ENCODE measurements at regions of chr1 and their contacts with region 1.

Region 1: DNA sequence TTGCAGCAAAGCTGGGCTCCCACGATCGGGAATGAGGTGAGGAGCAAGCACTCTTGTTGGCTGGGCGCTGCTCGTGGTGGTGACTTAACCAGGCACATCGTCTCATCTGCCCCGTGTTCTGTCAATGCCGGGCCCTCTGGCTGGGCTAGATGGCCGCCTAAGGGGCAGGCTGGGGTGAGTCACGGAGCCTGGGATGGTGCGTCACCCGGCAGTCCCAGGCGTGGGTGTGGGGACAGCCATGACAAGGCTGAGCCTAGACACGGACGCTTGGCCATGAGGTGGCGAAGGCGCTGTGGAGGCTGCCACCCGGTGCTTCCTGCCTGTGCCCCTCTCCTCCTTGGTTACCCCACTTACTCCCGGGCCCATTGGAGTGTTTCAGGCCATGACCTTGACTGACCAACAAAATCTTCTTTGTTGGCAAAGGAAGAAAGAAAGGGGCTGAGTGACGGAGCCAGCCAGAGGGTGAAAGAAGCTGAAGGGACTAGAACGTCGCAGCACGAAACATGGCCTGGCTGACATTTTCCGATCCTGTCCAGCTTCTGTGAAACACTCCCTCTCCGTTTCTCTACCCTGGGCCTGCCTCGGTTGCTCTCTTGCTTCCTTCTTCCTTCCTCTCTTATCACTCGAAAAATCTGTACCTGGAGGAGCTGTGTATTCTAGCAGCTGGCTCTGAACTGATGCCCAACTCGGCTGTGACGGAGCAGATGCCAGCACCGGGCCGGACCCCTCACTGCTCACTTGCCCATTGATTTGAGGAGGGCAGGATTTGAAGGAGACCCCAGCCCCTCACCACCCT is 596 bp downstream of the CD247 start:
- DNase-seq: peak; percentile 85
- ATAC-seq: peak; percentile 81
- H3K4me3 Mint-ChIP-seq: peak overlapping the region; percentile 93
- H3K27ac Mint-ChIP-seq: peak overlapping the region; percentile 98
- H3K4me1 Mint-ChIP-seq: peaks cover 50% of the 10 kb centered on the region
- H3K27me3 Mint-ChIP-seq: no peaks in the 10 kb centered on the region

Region 2: GRCh38 chr1:167220537-167221125 is 297.1 kb before region 1 on chr1 and contains the start of gene POU2F1:
- CTCF ChIA-PET with region 1: interaction called, 12 read pairs
- POLR2A ChIA-PET with region 1: interaction called, 10 read pairs
- DNase-seq: peak; percentile 99
- ATAC-seq: peak; percentile 87
- H3K4me3 Mint-ChIP-seq: peak within 1 kb of the TSS; percentile 91
- H3K27ac Mint-ChIP-seq: peak within 1 kb of the TSS; percentile 95
- H3K4me1 Mint-ChIP-seq: peaks cover 30% of the 10 kb centered on the region
- H3K27me3 Mint-ChIP-seq: no peaks in the 10 kb centered on the region
- total RNA-seq, gene POU2F1: 22.7 to 23.3 TPM

Region 3: DNA sequence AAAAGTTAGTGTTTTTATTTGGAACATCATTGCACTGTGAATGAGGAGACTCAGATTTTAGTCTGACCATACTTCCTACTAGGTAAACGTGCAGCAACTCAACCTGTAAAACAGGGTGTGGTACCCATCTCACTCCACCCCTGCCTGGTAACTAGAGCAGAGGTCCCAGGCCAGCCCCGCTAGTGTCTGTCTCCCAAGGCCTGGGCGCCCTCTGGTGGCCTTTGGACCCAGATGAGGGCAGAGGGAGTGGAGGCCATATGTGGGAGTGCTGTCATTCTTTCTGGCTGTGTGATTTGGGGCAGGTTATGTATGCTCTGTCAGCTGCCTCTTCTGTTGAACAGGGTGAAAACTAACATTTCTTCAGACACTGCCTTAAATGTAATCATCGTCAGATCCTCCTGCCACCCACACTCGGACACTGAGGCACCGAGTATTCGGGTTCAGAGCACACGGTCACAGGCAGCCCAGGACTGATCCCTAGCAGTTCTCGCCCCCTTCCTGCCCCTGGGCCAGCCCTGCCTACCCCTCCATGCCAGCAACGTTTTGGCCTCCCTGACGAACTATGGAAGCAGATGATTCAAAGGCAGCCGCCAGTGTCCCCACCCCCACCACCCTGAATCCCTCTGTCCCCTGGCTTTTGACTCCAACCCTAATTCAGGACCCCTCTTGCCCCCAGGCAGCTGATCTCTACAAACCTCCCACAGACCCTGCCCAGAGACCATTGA is 75.4 kb before region 1 on chr1:
- CTCF ChIA-PET with region 1: interaction called, 28 read pairs
- POLR2A ChIA-PET with region 1: interaction called, 37 read pairs
- DNase-seq: peak; percentile 91
- ATAC-seq: peak; percentile 85
- H3K4me3 Mint-ChIP-seq: no peak overlapping the region
- H3K27ac Mint-ChIP-seq: peak overlapping the region; percentile 81
- H3K4me1 Mint-ChIP-seq: peaks cover 94% of the 10 kb centered on the region
- H3K27me3 Mint-ChIP-seq: no peaks in the 10 kb centered on the region

Region 4: GRCh38 chr1:167454894-167455785 is 62.6 kb before region 1 on chr1:
- CTCF ChIA-PET with region 1: interaction called, 51 read pairs
- POLR2A ChIA-PET with region 1: interaction called, 42 read pairs
- DNase-seq: peak; percentile 88
- ATAC-seq: peak; percentile 70
- H3K4me3 Mint-ChIP-seq: peak overlapping the region; percentile 78
- H3K27ac Mint-ChIP-seq: peak overlapping the region; percentile 81
- H3K4me1 Mint-ChIP-seq: peaks cover 75% of the 10 kb centered on the region
- H3K27me3 Mint-ChIP-seq: no peaks in the 10 kb centered on the region

Region 5: GRCh38 chr1:167482184-167482583 is 35.5 kb before region 1 on chr1:
- CTCF ChIA-PET with region 1: interaction called, 14 read pairs
- POLR2A ChIA-PET with region 1: interaction called, 13 read pairs
- DNase-seq: peak; percentile 64
- ATAC-seq: peak; percentile 21
- H3K4me3 Mint-ChIP-seq: peak overlapping the region; percentile 73
- H3K27ac Mint-ChIP-seq: peak overlapping the region; percentile 96
- H3K4me1 Mint-ChIP-seq: peaks cover 97% of the 10 kb centered on the region
- H3K27me3 Mint-ChIP-seq: no peaks in the 10 kb centered on the region

Region 6: GRCh38 chr1:167499664-167500101 is 18.1 kb before region 1 on chr1:
- CTCF ChIA-PET with region 1: interaction called, 67 read pairs
- POLR2A ChIA-PET with region 1: interaction called, 60 read pairs
- DNase-seq: peak; percentile 60
- ATAC-seq: peak; percentile 61
- H3K4me3 Mint-ChIP-seq: peak overlapping the region; percentile 66
- H3K27ac Mint-ChIP-seq: peak overlapping the region; percentile 86
- H3K4me1 Mint-ChIP-seq: peaks cover 100% of the 10 kb centered on the region
- H3K27me3 Mint-ChIP-seq: no peaks in the 10 kb centered on the region

Region 7: GRCh38 chr1:167578939-167579521 is 61.3 kb after region 1 on chr1:
- CTCF ChIA-PET with region 1: no interaction called
- POLR2A ChIA-PET with region 1: no interaction called
- DNase-seq: no peak
- ATAC-seq: no peak
- H3K4me3 Mint-ChIP-seq: no peak overlapping the region
- H3K27ac Mint-ChIP-seq: no peak overlapping the region
- H3K4me1 Mint-ChIP-seq: no peaks in the 10 kb centered on the region
- H3K27me3 Mint-ChIP-seq: peaks cover 33% of the 10 kb centered on the region